Dorsolateral prefrontal cortex (tissue), 120 donors: ENCODE measurements at regions of chr10 and their contacts with region 1.

Region 1: DNA sequence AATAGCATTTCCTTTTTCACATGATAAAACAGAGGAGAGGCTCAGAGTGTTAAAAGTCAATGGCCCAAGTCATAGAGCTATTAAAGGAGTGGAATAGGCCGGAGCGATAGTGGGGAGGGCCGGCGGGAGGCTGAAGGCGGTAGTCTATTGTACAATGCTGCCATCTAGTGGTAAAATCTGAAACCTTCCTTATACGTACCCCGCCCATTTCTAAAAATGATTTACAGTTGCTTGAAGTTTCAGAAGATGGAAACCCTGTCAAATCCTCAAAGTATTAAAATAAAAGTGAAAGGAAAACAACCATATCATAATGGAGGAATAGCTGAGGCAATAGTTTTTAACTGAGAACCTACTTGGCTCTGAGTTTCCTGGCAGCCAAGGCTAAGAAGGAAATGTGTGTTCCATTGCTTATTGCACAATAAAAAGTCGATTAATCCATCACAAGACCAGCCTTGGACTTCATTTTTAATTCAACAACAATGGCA is 209.1 kb downstream of the CCSER2 start:
- DNase-seq: peak in 5 of 10 donors; percentile 26 to 51 (median 45)
- H3K4me3 ChIP-seq: peak overlapping the region in 5 of 59 donors; percentile 17 to 35 (median 30)
- H3K27ac ChIP-seq: no peak overlapping the region
- H3K27me3 ChIP-seq: peaks cover 0 to 5% (median 0%) of the 10 kb centered on the region in 45 donors
- CTCF ChIP-seq: peak; percentile 78 to 99 (median 92)

Region 2: DNA sequence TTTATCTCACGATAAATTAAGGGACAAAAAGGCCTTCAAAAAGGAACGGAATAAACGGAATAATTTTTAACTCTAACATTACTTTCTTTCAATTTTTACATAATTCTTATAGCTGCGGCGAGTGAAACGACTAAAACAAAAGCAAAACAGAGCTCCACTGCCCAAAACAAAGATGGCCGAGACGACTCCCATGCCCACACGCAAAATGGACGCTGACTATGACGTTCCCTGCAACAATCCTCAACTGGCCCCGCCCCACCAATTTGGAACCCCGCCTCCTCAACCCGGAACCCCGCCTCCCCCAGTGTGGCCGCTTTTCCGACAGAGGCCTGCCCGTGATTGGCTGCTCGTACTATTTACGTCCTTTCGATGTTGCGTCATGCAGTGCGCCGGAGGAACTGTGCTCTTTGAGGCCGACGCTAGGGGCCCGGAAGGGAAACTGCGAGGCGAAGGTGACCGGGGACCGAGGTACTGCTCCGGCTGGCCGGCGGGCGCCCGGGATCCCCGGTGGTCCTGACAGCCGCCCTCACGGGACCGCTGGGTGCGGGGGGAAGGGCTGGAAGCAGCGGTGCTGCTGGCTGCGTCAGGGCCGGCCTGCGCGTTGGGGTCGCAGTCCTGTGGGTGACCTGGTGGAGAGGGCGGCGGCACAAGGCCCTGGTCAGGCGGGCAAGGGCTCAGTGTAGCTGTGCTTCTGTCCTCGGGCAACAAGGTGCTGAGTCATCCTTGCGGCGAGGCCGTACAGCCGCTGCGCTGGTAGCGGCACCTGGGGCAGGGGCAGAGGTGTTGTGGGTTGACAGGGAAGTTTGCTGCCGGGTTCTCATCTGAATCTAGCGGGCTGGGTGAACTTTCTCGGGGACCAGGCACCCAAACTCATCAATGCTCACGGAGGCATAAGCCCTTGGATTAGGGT is 398.1 kb before region 1 on chr10 and contains the start of gene GHITM:
- intact Hi-C with region 1: loop called in 1 of 2 experiments (anchors 10 kb)
- DNase-seq: peak; percentile 97 to 99 (median 99)
- H3K4me3 ChIP-seq: peak within 1 kb of the TSS; percentile 73 to 100 (median 99)
- H3K27ac ChIP-seq: peak within 1 kb of the TSS; percentile 55 to 99 (median 93)
- H3K27me3 ChIP-seq: no peaks in the 10 kb centered on the region
- CTCF ChIP-seq: peak in 50 of 56 donors; percentile 15 to 64 (median 48)
- total RNA-seq, gene GHITM: 112 to 296 (median 226) TPM

Region 3: DNA sequence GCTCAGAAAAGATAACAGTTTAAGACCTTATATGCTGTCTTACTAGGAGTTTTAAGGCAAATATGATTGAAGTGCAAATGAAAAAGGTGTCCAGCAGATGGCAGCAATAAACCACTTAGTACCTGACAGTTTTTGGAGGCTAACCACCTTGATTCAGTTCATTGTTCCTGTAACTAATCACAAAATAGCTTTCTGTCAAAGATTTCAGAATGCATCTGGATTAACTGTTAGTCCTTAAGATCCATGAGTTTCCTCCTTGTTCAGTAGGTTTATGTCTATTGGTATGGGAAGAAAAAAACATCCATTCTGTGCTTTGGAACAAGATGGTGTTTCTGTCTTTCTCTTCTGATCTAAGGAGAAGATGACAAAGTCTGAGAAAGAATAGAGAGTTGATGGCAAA is 162.5 kb before region 1 on chr10:
- intact Hi-C with region 1: loop called (anchors 1 to 5 kb)
- DNase-seq: peak in 2 of 10 donors; percentile 25 to 43
- H3K4me3 ChIP-seq: no peak overlapping the region
- H3K27ac ChIP-seq: peak overlapping the region in 2 of 59 donors; percentile 5 to 31
- H3K27me3 ChIP-seq: no peaks in the 10 kb centered on the region
- CTCF ChIP-seq: peak; percentile 56 to 94 (median 78)

Region 4: DNA sequence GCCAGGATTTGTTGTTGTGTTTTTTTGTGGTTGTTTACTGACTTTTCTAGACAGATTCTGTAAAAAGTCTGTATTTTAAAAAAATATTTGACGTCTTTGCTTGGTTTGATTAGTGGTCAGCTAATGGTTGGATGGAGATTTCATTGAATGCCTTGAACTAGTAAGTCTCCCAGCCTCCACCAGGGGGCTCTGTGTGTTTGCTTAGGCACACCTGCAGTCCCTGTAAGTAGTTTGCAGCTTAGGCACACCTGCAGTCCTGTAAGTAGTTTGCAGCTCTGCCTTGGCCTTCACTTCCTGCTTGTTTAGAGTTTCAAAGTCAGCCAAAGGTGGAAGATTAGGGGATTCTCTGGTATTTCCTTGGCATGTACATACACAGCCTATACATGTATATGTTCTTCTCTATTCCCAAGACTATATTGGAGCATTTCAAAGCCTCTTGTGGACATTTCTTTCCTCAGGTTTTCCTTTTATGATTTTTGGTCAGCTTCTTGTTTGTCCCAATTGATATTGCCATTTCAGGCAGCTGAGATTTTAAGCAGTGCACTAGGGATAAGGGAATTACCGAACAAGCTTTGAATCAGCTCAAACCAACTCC is 107.5 kb before region 1 on chr10:
- intact Hi-C with region 1: loop called (anchors 5 kb)
- DNase-seq: peak in 8 of 10 donors; percentile 39 to 79 (median 52)
- H3K4me3 ChIP-seq: no peak overlapping the region
- H3K27ac ChIP-seq: no peak overlapping the region
- H3K27me3 ChIP-seq: no peaks in the 10 kb centered on the region
- CTCF ChIP-seq: peak; percentile 34 to 81 (median 66)